Activated naive CD4-positive, alpha-beta T cell treated with anti-CD3 and anti-CD28 coated beads for 36 hours (primary cell): ENCODE measurements at regions of chr10 and their contacts with region 1.

Region 1: GRCh38 chr10:110497438-110498086 is at the start of gene DUSP5:
- DNase-seq: peak; percentile 94
- H3K4me3 Mint-ChIP-seq: peak within 1 kb of the TSS; percentile 97
- H3K27ac Mint-ChIP-seq: peak within 1 kb of the TSS; percentile 94
- H3K4me1 Mint-ChIP-seq: peaks cover 43% of the 10 kb centered on the region
- H3K27me3 Mint-ChIP-seq: no peaks in the 10 kb centered on the region
- total RNA-seq, gene DUSP5: 51.0 to 53.5 TPM

Region 2: GRCh38 chr10:110067960-110068770 is 429.4 kb before region 1 on chr10:
- CTCF ChIA-PET with region 1: no interaction called
- intact Hi-C with region 1: loop called (anchors 5 kb)
- DNase-seq: peak; percentile 75
- H3K4me3 Mint-ChIP-seq: peak overlapping the region; percentile 56
- H3K27ac Mint-ChIP-seq: peak overlapping the region; percentile 91
- H3K4me1 Mint-ChIP-seq: peaks cover 82% of the 10 kb centered on the region
- H3K27me3 Mint-ChIP-seq: no peaks in the 10 kb centered on the region

Region 3: GRCh38 chr10:110324201-110324804 is 173.3 kb before region 1 on chr10:
- CTCF ChIA-PET with region 1: no interaction called
- intact Hi-C with region 1: loop called (anchors 1 kb)
- DNase-seq: no peak
- H3K4me3 Mint-ChIP-seq: no peak overlapping the region
- H3K27ac Mint-ChIP-seq: peak overlapping the region; percentile 84
- H3K4me1 Mint-ChIP-seq: peaks cover 37% of the 10 kb centered on the region
- H3K27me3 Mint-ChIP-seq: peaks cover 2% of the 10 kb centered on the region

Region 4: DNA sequence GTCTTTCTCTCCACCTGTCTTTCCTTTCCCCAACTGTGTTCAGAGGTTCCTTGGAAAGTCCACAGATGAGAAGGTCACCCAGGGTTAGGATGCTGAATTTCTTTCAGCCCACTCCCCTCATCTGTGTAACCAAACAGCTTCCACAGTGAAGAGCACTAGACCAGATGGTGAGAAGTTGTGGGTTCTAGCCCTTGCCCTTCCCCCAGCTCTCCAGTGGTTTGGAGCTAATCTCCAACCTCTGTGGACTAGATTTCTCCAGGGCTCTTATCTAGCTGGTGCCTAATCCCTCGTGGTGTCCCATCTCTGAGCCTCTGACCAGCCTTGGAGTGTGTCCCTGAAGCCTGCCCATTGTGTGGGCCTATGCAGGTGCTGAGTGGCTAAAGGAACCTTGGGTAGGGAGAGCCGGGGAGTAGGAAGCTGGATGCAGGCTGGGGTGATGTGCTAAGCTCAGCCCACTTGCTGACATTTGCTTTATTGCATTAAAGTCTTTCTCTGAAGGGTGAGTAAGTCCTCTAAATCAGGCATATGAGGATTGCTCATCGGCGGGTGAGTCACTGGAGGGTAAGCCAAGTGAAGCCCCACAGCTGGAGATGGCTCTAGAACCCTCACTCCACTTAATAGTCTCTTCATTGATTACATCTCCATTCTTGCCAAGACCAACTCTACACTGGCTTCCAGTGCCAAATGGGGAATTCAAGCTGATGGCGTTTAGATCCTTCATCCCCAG is 15.1 kb after region 1 on chr10:
- CTCF ChIA-PET with region 1: interaction called, 15 read pairs
- intact Hi-C with region 1: no loop called
- DNase-seq: peak; percentile 86
- H3K4me3 Mint-ChIP-seq: no peak overlapping the region
- H3K27ac Mint-ChIP-seq: peak overlapping the region; percentile 80
- H3K4me1 Mint-ChIP-seq: peaks cover 51% of the 10 kb centered on the region
- H3K27me3 Mint-ChIP-seq: no peaks in the 10 kb centered on the region